ENCODE measurements at regions of chr17 and their contacts with region 1.

Region 1: DNA sequence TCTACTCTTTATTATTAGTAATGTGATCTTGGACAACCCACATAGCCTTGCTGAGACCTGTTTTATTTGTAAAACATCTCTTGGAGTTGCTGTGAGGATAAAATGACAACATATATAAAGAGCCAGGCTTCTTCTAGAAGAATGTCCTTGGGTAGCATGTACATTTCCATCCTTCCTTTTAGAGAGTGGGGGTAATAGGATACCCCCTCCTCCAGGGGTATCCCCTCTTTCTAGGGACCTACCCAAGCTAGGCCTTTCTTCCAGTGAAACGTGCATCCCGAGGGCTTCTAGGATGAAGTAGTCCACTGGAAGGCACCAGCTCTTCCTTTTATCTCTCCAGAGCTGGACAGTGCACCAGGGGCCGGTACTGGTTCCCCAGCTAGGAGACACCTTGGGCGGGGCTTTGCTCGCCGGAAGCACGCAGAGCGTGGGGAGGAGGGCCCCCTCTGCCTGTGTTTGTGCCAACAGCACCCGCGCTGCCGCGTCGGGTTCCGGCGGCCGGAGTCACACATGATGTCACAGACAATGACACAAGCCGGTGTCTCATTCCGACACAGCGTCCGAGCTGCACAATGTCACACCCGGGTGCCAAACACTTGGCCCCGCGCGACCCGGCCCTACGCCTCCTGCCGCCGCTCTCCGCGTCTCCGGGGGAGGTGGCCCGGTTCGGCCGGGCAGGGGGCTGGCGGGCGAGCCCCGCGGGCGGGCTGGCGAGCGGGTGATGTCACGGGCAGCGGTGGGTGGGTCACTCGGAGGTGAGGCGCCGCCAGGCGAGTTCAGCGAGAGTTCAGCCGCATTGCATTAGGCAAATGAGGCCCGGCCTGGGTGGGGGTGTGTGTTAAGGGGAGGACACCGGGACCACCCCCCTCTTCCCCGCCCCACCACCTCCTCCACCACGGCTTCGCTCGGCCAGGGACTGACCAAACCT is 23.4 kb downstream of the GJD3 start:
- DNase-seq: peak; percentile 89 to 98
- H3K4me3 ChIP-seq: peak overlapping the region; percentile 73
- CTCF ChIP-seq: no peak
- POLR2A ChIP-seq: no peak

Region 2: GRCh38 chr17:40038882-40039513 is 302.1 kb before region 1 on chr17:
- intact Hi-C with region 1: no loop called
- DNase-seq: peak in 1 of 2 donors; percentile 72
- H3K4me3 ChIP-seq: no peak overlapping the region
- CTCF ChIP-seq: no peak
- POLR2A ChIP-seq: no peak

Region 3: GRCh38 chr17:40113110-40113906 is 227.8 kb before region 1 on chr17:
- intact Hi-C with region 1: loop called (anchors 10 kb)
- DNase-seq: peak; percentile 96 to 99
- H3K4me3 ChIP-seq: peak overlapping the region; percentile 18
- CTCF ChIP-seq: peak in 1 of 3 donors; percentile 77
- POLR2A ChIP-seq: no peak

Region 4: GRCh38 chr17:40378966-40379365 is 37.8 kb after region 1 on chr17:
- intact Hi-C with region 1: no loop called
- DNase-seq: no peak
- H3K4me3 ChIP-seq: no peak overlapping the region
- CTCF ChIP-seq: no peak
- POLR2A ChIP-seq: no peak